Activated T-helper 2 cell treated with anti-CD3 and anti-CD28 coated beads, Interferon-gamma antibody, Interleukin-2, Interleukin-4, amounts not matched to agents 10 μg/mL and 5 μg/mL and 100 μg/mL, durations not matched to agents 14 hours and 24 hours and 36 hours (primary cell): ENCODE measurements at regions of chr1 and their contacts with region 1.

Region 1: DNA sequence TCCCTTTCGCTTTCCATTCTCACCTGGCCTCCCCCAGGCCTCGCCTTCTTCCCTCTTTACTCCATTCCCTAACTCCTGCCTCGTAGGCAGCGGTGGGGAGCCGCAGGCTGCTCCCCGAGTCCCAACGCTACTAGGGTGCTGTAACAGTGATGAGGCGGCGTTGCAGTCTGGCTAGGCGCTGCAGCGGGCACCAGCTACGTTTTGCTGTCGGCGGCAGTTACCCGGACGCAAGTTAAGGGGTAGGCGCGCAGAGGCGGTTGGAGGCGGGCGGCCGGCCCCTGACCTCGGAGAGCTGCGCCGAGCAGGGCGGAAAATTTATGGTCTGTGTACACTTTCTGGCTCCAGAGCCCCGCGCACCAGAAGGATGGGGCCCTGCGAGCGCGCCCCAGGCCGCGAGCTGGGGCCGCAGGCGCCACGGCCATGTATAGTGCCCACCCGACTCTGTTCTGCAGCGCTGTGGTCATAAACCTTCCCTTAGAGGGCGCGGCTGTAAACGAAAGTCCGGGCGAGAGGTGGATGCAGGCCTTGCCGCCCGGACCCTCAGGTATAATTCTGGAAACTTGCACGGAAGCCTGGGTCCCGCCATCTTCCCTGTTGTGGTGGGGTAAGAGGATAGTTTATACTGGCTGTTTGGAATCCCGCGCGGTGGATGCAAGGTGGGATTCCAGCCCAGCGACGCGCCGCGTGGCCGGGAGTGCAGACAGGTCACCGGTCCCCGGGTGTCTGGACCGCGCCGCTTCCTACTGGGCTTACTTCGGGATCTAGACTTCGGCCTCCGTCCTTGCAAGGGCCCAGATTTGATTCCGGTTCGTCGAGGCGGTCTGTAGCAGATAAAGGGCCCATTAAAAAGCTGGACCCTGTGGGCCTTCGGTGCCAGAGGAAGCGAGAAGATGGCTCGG is 15.0 kb downstream of the HLX start:
- DNase-seq: no peak
- H3K4me3 Mint-ChIP-seq: peak overlapping the region; percentile 49
- H3K27ac Mint-ChIP-seq: no peak overlapping the region
- H3K4me1 Mint-ChIP-seq: peaks cover 12% of the 10 kb centered on the region
- H3K27me3 Mint-ChIP-seq: peaks cover 68% of the 10 kb centered on the region

Region 2: GRCh38 chr1:220879076-220879508 is 15.2 kb before region 1 on chr1 and contains the start of gene HLX:
- intact Hi-C with region 1: loop called (anchors 2 kb)
- DNase-seq: peak; percentile 15
- H3K4me3 Mint-ChIP-seq: peak within 1 kb of the TSS; percentile 85
- H3K27ac Mint-ChIP-seq: peak within 1 kb of the TSS; percentile 78
- H3K4me1 Mint-ChIP-seq: peaks cover 31% of the 10 kb centered on the region
- H3K27me3 Mint-ChIP-seq: peaks cover 70% of the 10 kb centered on the region
- total RNA-seq, gene HLX: 8.2 and 10.4 TPM in 2 replicates